ENCODE measurements at regions of chr12 and their contacts with region 1.

Region 1: DNA sequence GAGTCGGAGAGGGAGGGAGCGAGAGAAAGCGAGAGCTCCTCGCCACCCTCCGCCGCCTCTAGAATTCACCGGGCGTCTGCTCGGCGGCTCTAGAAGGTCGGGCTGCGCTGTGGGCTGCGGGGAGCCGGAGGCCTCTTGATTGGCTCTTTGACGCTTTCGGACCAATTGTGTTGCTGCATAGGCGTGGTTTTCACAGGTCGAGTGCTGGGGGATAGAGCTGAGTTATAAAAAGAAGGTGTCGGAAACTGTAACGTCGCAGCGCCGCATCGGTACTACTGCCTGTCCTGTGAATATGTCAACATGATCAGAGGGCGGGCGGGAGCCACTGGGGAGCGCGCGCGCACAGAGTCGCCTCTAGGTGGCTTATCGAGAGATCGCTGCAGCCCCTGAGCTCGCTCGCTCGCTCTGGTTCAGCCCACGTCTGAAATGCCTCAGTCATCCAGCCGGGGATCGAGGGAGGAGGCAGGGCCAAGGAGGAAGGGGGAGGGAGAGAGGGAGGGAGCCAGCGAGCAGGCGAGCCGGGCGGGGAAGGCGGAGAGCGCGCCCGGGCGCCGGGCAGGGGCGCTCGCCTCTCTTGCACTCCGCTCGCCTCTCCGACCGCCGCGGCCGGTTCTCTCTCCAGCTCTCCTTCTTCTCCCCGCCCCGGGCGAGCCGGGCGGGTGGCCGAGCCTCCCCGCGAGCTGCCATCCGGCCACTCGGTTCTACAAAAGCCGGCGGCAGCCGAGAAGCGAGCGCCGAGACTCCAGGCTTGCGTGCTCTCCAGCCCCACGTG is at the start of gene TBX3:
- DNase-seq: peak; percentile 99
- H3K4me3 Mint-ChIP-seq: peak within 1 kb of the TSS; percentile 97
- H3K27ac Mint-ChIP-seq: peak within 1 kb of the TSS; percentile 86
- H3K4me1 Mint-ChIP-seq: peaks cover 17% of the 10 kb centered on the region
- H3K27me3 Mint-ChIP-seq: peaks cover 14% of the 10 kb centered on the region
- CTCF ChIP-seq: peak; percentile 60
- total RNA-seq, gene TBX3: 6.6 and 8.0 TPM in 2 replicates

Region 2: DNA sequence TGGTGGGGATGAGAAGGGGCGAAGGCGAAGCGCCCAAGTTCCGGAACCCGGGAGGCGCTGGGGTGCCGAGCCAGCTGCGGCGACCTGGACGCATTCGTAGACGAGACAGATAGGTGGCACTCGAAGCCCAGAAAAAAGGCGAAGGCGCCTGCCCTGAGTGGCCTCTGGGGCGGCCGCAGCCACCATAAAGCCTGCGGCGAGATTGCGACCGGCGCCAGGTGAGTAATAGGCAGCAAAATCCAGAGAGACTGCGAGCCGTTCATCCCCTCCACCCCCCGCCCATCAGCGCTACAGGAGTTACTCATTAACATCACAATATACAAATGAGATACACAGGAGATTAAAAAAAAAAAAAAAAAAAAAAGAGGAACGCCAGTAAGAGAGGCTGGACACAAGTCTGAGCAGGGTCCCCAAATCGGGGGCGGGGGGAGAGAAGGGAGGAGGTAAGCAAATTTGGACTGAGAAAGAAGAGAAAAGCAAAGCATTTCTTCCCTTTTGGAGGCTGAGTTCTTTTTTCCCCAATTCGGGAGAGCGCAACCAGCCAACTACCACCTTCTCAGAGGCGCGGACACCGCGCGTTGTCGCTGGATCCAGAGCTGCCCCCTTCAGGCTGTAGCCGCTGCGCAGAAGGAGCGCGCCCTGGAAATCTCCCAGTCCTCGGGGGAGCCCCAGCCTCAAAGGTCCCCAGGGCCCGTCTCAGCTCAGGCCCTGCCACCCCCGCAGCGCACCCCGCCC is 16.0 kb before region 1 on chr12:
- CTCF ChIA-PET with region 1: interaction called, 7 read pairs
- POLR2A ChIA-PET with region 1: interaction called, 13 read pairs
- intact Hi-C with region 1: no loop called
- DNase-seq: peak; percentile 92
- H3K4me3 Mint-ChIP-seq: peak overlapping the region; percentile 72
- H3K27ac Mint-ChIP-seq: no peak overlapping the region
- H3K4me1 Mint-ChIP-seq: peaks cover 7% of the 10 kb centered on the region
- H3K27me3 Mint-ChIP-seq: no peaks in the 10 kb centered on the region
- CTCF ChIP-seq: peak; percentile 64

Region 3: GRCh38 chr12:115070313-115070712 is 386.0 kb after region 1 on chr12:
- CTCF ChIA-PET with region 1: no interaction called
- POLR2A ChIA-PET with region 1: no interaction called
- intact Hi-C with region 1: no loop called
- DNase-seq: peak; percentile 17
- H3K4me3 Mint-ChIP-seq: no peak overlapping the region
- H3K27ac Mint-ChIP-seq: no peak overlapping the region
- H3K4me1 Mint-ChIP-seq: no peaks in the 10 kb centered on the region
- H3K27me3 Mint-ChIP-seq: no peaks in the 10 kb centered on the region
- CTCF ChIP-seq: no peak

Region 4: GRCh38 chr12:115166698-115167315 is 482.5 kb after region 1 on chr12:
- CTCF ChIA-PET with region 1: interaction called, 3 read pairs
- POLR2A ChIA-PET with region 1: no interaction called
- intact Hi-C with region 1: loop called (anchors 2 kb)
- DNase-seq: peak; percentile 25
- H3K4me3 Mint-ChIP-seq: no peak overlapping the region
- H3K27ac Mint-ChIP-seq: no peak overlapping the region
- H3K4me1 Mint-ChIP-seq: no peaks in the 10 kb centered on the region
- H3K27me3 Mint-ChIP-seq: no peaks in the 10 kb centered on the region
- CTCF ChIP-seq: no peak

Region 5: GRCh38 chr12:115341442-115341841 is 657.2 kb after region 1 on chr12:
- CTCF ChIA-PET with region 1: interaction called, 5 read pairs
- POLR2A ChIA-PET with region 1: interaction called, 15 read pairs
- intact Hi-C with region 1: no loop called
- DNase-seq: peak; percentile 99
- H3K4me3 Mint-ChIP-seq: peak overlapping the region; percentile 31
- H3K27ac Mint-ChIP-seq: peak overlapping the region; percentile 94
- H3K4me1 Mint-ChIP-seq: peaks cover 21% of the 10 kb centered on the region
- H3K27me3 Mint-ChIP-seq: no peaks in the 10 kb centered on the region
- CTCF ChIP-seq: no peak

Region 6: DNA sequence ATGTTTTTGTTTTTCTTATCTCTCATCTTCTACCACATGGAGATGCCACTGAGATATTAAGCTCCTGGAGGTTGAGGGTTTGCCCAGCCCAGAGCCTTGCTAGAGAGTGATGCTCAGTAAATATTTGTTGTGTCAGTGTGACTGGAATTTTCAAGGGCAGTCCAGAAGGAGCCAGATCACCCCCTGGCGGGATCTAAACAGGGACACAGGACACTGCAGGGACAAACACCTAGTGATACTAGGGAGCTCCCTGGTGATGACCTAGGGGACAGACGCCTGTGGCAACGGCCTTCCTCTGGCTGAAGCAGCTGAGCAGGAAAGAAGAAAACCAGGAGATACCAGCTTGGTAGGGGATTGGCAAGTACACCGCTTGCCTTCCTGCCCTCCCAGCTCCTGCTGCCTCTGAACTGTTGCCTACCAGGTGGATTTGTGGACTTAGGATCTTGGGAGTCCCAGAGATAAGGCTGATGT is 714.1 kb after region 1 on chr12:
- CTCF ChIA-PET with region 1: interaction called, 5 read pairs
- POLR2A ChIA-PET with region 1: interaction called, 6 read pairs
- intact Hi-C with region 1: loop called (anchors 1 kb)
- DNase-seq: peak; percentile 32
- H3K4me3 Mint-ChIP-seq: no peak overlapping the region
- H3K27ac Mint-ChIP-seq: no peak overlapping the region
- H3K4me1 Mint-ChIP-seq: no peaks in the 10 kb centered on the region
- H3K27me3 Mint-ChIP-seq: peaks cover 10% of the 10 kb centered on the region
- CTCF ChIP-seq: peak; percentile 36

Region 7: GRCh38 chr12:115752913-115753726 is 1068.8 kb after region 1 on chr12:
- CTCF ChIA-PET with region 1: interaction called, 4 read pairs
- POLR2A ChIA-PET with region 1: interaction called, 10 read pairs
- intact Hi-C with region 1: loop called (anchors 1 kb)
- DNase-seq: peak; percentile 66
- H3K4me3 Mint-ChIP-seq: no peak overlapping the region
- H3K27ac Mint-ChIP-seq: no peak overlapping the region
- H3K4me1 Mint-ChIP-seq: no peaks in the 10 kb centered on the region
- H3K27me3 Mint-ChIP-seq: peaks cover 52% of the 10 kb centered on the region
- CTCF ChIP-seq: peak; percentile 64

Measured in MCF 10A (cell line).